ENCODE measurements at regions of chr10 and their contacts with region 1.

Region 1: DNA sequence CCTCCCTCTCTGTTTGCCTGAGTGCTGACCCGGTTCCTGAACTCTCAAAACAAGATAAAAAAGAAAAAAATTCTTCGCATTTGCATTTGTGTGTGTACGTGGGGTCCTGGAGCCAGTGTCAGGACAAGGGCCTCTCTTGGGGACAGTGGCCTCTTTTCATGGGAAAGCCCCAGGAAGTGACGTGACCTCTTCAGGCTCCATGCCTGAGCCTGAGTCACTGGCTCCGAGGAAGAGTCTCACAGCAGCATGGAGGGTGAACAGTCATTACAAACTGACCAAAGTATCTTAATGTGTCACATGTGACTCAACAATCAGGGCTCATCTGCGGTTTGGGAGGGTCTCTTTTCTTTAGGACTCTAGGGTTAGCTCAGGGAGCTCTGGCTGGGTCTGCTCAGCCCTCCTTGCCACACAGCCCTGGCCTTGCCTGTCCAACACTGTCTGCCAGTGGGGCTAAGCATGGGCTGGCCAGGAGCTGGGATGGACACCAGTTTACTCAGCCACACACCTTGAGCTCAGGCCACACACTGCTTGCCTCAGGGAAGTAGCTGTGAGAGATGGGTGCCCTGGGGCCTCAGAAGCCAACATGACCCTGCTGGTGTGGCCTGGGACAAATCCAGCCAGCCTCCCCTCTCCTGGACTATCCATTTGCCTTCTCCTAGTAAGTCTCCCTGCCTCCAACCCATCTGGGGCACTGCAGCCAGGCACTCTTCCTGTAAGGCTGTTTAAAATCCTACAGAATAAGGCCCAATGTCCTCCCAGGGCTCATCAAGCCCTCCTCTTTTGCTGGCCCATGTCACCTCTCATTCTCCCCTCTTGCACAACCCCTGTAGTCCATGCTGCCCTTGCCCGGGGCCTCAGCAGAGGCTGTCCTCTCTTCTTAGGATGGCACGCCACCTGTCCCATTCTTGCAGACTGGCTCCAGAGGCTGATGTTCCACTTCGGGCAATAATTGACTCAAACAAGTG is 10.5 kb downstream of the TMEM273 start:
- DNase-seq: peak; percentile 68
- H3K4me3 Mint-ChIP-seq: peak overlapping the region; percentile 64
- H3K27ac Mint-ChIP-seq: peak overlapping the region; percentile 97
- H3K4me1 Mint-ChIP-seq: peaks cover 65% of the 10 kb centered on the region
- H3K27me3 Mint-ChIP-seq: peaks cover 4% of the 10 kb centered on the region

Region 2: GRCh38 chr10:48306265-48306869 is 871.3 kb before region 1 on chr10 and contains the start of gene MAPK8:
- intact Hi-C with region 1: loop called (anchors 5 kb)
- DNase-seq: peak; percentile 88
- H3K4me3 Mint-ChIP-seq: peak within 1 kb of the TSS; percentile 85
- H3K27ac Mint-ChIP-seq: peak within 1 kb of the TSS; percentile 68
- H3K4me1 Mint-ChIP-seq: peaks cover 19% of the 10 kb centered on the region
- H3K27me3 Mint-ChIP-seq: peaks cover 17% of the 10 kb centered on the region
- total RNA-seq, gene MAPK8: 51.6 and 52.3 TPM in 2 replicates

Region 3: GRCh38 chr10:49076741-49077521 is 100.7 kb before region 1 on chr10:
- intact Hi-C with region 1: loop called (anchors 1 kb)
- DNase-seq: no peak
- H3K4me3 Mint-ChIP-seq: no peak overlapping the region
- H3K27ac Mint-ChIP-seq: peak overlapping the region; percentile 37
- H3K4me1 Mint-ChIP-seq: peaks cover 30% of the 10 kb centered on the region
- H3K27me3 Mint-ChIP-seq: peaks cover 3% of the 10 kb centered on the region

Region 4: DNA sequence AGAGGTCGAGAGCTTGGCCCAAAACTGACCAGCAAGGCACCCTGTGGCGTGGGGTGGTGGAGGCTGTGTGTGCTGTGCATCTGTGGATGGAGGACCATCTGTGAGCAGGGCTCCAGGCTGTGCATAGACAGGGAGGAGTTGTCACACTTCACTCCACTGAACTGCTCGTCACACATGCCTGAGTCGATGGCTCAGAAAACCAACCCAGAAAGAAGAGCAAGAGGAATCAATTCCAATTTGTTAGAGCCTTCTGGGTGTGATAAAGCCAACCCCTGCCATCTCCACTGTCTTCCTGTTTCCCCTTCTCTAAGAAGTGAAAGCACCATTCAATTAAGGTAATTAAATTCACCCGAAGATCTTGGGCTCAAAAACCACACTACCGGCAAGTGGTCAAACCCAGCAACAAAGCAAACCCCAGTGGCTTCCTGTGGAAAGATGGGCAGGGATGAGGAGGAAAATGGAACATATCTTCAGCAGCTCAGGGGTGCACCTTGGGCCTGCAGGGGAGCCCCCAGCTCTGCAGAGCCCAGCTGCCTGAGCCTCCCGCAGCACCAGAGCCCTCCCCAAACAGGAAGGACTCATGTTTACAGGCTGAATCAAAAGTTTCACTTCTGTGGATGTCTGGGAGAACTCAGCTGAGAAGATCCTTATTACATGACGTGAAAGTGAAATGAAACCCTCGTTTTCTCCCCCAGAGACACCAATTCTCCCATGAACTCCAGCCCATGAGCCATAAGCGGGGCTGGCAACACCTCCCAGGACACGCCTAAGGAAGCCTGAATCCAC is 132.1 kb after region 1 on chr10:
- intact Hi-C with region 1: loop called (anchors 2 kb)
- DNase-seq: peak; percentile 5
- H3K4me3 Mint-ChIP-seq: no peak overlapping the region
- H3K27ac Mint-ChIP-seq: peak overlapping the region; percentile 21
- H3K4me1 Mint-ChIP-seq: peaks cover 17% of the 10 kb centered on the region
- H3K27me3 Mint-ChIP-seq: peaks cover 1% of the 10 kb centered on the region

Region 5: DNA sequence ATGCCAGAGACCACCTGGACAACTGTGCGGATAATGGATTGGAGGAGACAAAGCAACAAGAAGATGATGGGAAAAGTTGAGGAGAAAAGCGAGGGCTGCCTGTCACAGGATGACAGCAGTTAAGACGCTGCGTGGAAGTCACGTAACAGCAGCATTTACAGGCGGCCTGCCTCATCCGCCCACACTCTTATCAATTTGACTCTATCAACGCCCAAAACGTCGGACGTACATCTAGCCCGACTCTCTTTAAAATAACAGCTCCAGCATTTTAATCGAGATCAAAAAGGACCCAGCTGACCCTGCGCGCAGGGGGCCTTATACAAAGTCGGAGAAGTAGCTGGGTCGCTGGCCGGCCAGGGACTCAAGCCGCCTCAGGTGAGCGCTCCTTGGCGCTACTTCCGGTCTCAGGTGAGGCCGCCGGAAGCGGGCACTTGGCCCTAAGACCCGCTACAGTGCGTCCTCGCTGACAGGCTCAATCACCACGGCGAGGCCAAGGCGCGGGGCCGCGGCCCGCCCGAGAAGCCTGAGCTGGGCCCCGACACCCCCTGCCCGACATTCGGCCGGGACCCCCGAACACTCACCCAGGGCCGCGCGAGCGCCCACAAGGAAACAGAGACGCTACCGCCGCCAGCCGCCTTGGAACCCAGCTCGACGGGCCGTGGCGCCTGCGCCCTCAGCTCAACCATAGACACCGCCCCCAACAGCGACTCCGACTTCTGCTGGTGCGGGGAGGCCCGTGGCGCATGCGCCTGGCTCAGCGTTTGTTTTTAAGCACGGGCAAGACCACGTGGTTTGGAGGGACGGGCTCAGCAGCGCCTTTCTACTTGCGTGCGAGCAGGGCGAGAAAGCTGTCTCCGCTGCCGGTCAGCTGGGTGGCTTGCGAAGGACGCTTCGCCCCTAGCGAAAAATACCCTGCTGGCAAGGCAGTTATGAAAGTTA is 361.0 kb after region 1 on chr10 and contains the start of gene ERCC6:
- intact Hi-C with region 1: loop called (anchors 1 kb)
- DNase-seq: peak; percentile 95
- H3K4me3 Mint-ChIP-seq: peak within 1 kb of the TSS; percentile 92
- H3K27ac Mint-ChIP-seq: peak within 1 kb of the TSS; percentile 96
- H3K4me1 Mint-ChIP-seq: peaks cover 34% of the 10 kb centered on the region
- H3K27me3 Mint-ChIP-seq: peaks cover 2% of the 10 kb centered on the region
- total RNA-seq, gene ERCC6: 11.2 and 11.7 TPM in 2 replicates

Region 6: DNA sequence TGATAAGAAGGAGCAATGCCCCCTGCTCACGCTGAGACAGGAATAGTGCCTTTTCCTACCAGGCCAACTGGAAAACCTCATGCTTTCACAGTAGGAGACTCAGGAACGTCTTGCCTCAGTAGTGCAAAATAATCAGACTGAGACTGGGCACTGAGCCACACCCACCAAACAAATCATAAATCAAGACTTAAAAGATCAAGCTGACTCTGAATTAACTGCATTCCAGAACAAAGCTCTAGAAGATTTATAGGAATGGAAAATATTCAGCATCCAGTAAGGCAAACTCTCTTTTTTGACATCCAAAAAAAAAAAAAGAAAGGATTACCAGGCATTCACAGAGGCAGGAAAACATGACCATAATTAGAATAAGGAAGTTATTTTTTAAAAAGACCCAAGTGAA is 401.9 kb after region 1 on chr10:
- intact Hi-C with region 1: no loop called
- DNase-seq: no peak
- H3K4me3 Mint-ChIP-seq: no peak overlapping the region
- H3K27ac Mint-ChIP-seq: no peak overlapping the region
- H3K4me1 Mint-ChIP-seq: peaks cover 15% of the 10 kb centered on the region
- H3K27me3 Mint-ChIP-seq: peaks cover 4% of the 10 kb centered on the region